GM10248 (cell line): ENCODE measurements at regions of chr2 and their contacts with region 1.

Region 1: DNA sequence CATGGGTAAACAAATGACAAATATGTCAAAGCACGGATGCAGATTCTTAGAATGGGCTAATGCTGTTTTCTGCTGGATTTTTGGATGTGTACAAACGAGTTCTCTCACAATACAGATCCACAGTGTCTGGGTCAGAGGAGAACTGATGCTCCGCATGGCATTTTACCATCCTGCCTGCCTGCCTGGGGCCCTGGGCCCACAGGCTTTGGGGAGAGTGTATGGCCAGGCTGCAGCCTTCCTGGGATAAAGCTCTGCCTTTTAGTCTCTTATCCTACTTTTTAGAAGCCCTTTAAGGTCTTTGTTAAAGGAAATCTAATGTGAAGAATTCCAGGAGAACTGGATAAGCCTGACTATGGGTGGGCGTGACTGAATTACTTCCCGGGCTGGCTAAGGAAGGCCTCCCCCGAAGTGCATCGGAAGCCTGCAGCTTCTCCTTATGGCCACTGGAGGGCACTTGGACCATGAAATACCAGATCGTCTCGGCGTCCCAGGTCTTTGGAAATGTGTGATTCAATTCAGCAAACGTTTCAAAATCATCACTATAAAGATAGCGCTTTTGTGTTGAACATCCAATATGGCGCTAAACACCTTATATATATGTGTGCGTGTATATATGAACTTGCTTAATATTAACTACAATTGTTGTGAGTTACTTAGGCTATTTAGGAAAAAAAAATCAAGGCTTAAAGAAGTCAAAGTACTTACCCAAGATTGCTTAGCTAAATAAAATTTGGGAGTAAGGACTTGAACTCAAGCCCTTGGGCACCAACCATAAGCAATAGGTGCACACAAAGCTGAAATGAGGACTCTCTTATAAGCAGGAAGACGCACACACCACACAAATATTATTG is 15.2 kb upstream of the DNPEP start:
- DNase-seq: peak; percentile 77
- CTCF ChIP-seq: peak; percentile 78

Region 2: DNA sequence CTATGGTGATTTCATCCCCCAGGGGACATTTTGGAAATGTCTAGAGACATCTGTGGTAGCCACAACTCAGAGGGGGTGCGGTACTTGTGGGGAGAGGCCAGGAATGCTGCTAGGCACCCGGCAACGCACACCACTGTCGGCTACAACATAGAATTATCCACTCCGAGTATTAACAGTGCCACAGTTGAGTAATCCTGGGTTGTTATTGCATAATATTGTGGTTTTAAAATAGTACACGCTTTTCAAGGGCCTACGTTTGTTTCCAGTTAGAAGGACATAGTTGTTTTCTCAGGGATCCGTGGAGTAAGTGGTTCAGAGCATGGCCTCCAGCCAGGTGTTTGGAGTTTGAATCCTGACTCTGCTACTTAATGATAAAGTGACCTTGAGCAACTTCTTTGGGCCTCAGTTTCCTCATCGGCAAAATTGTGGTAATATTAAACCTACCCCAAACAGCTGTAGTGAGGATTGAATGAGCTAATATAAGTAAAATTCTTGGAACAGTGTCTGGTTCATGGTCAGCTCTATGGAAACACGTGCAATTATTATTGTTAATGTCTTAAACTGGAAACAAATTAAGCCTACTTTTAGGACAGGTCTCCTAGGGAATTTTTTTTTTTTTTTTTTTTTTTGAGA is 596.4 kb before region 1 on chr2:
- CTCF ChIA-PET with region 1: no interaction called
- POLR2A ChIA-PET with region 1: no interaction called
- DNase-seq: peak; percentile 22
- CTCF ChIP-seq: no peak

Region 3: GRCh38 chr2:219388127-219388844 is 14.6 kb before region 1 on chr2:
- CTCF ChIA-PET with region 1: interaction called, 76 read pairs
- POLR2A ChIA-PET with region 1: interaction called, 3 read pairs
- DNase-seq: peak; percentile 99
- CTCF ChIP-seq: peak; percentile 60

Region 4: GRCh38 chr2:219417374-219417773 is 14.5 kb after region 1 on chr2:
- CTCF ChIA-PET with region 1: interaction called, 19 read pairs
- POLR2A ChIA-PET with region 1: no interaction called
- DNase-seq: no peak
- CTCF ChIP-seq: no peak

Region 5: DNA sequence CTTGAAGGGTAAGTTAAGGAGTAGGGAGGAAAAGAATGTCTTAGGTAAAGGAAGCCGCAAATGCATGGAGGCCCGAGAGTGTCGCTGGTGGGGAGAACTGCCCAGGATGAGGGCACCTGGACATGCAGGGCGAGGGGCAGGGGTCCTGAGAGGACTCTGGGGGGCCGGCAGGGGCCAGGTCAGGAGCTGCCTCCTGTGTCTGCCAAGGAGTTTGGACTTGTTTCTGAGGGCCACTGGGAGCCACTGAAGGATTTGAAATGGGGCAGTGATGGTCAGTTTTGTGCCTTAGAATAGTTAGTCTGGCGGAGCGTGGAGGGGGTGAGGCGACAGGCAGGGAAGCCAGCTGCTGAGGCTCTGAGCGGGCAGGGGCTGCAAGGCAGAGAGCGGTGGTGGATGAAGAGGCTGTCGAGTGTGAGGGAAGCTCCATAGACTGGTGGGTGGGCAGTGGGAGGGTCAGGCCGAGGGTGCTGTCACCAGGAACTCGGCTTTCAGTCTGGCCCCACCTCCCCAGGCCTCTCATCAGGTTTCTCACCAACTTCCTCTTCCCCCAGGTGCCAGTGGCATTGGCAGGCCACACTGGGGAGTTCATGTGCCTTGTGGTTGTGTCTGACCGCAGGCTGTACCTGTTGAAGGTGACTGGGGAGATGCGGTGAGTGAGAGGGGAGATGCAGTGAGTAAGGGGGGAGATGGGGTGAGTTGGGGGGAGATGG is 209.8 kb after region 1 on chr2:
- CTCF ChIA-PET with region 1: no interaction called
- POLR2A ChIA-PET with region 1: no interaction called
- DNase-seq: no peak
- CTCF ChIP-seq: no peak